ENCODE measurements at regions of chr4 and their contacts with region 1.

Region 1: GRCh38 chr4:86924811-86925210 is 10.0 kb upstream of the AFF1 start:
- DNase-seq: no peak
- H3K4me3 Mint-ChIP-seq: no peak overlapping the region
- H3K27ac Mint-ChIP-seq: no peak overlapping the region
- H3K4me1 Mint-ChIP-seq: peaks cover 11% of the 10 kb centered on the region
- H3K27me3 Mint-ChIP-seq: no peaks in the 10 kb centered on the region

Region 2: DNA sequence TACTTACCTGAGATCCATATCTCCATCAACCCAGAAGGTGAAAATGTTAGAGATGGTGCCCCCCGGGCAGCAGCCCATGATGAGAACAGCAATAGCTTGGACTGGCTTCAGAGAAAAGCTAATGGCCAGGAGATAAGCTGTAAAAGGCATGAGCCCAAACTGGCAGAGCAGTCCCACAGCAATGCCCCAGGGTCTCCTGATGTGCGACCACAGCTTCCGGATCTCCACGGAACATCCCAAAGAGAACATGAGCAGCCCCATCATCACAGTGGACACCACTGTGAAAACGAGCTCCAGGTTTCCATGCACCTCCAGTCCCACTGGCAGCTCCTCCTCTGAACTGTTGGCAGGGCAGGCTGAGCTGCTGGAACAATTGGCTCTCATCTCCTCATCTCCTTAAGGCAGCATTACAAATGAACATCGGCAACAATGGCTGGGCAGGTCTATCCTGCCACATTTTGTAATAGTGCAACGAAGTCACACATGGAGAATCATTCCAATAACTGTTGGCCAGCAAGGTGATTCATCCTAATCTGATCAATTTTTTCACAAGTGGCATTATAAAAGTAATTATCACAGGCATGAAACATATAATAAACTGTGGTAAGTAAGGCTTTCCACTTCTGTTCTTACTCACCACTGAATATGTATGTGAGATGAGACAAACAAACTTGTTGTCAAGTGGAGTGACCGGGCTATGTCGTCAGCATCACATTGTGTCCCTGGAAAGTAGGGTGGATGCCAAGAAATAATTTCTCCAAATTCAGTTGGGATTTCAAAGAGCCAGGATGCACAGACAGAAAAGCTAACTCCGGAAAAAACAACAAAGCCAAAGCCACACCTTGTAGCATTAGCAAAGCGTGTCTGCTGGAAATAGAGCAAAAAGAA is 75.8 kb before region 1 on chr4 and contains the start of gene SLC10A6:
- CTCF ChIA-PET with region 1: no interaction called
- POLR2A ChIA-PET with region 1: no interaction called
- DNase-seq: no peak
- H3K4me3 Mint-ChIP-seq: no peak within 1 kb of the TSS
- H3K27ac Mint-ChIP-seq: no peak within 1 kb of the TSS
- H3K4me1 Mint-ChIP-seq: no peaks in the 10 kb centered on the region
- H3K27me3 Mint-ChIP-seq: no peaks in the 10 kb centered on the region
- total RNA-seq, gene SLC10A6: not detected

Region 3: DNA sequence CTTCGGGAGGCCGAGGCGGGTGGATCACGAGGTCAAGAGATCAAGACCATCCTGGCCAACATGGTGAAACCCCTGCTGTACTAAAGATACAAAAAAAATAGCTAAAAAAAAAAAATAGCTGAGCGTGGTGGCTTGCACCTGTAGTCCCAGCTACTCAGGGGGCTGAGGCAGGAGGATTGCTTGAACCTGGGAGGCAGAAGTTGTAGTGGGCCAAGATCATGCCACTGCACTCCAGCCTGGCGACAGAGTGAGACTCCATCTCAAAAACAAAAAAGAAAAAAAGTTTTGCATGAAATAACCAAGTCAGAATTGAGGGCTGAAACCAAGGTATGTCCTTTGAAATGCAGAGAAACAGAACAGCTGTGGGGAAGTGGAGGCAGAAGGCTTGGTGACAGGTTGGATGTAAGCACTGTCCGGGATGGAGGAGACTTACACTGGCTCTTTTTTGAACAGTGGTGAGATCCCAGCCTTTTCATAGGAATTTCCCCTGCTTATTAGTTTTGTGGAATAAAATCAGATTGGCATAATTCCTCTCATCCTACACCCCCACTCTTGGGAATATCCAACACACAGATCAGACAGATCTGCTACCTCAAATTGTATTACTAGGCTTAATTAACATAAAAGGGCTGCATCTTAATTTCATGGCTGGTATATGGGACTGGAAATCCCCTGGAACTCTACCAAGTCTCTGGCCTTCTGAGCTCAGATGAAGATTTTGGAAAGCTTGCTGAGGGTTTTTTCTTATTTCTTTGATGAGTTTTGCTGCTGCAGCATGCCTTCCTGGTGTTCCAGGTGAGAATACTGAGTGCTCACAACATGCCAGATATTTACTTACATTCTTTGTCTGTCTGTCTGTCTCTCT is 13.8 kb before region 1 on chr4:
- CTCF ChIA-PET with region 1: interaction called, 18 read pairs
- POLR2A ChIA-PET with region 1: interaction called, 4 read pairs
- DNase-seq: no peak
- H3K4me3 Mint-ChIP-seq: no peak overlapping the region
- H3K27ac Mint-ChIP-seq: no peak overlapping the region
- H3K4me1 Mint-ChIP-seq: peaks cover 21% of the 10 kb centered on the region
- H3K27me3 Mint-ChIP-seq: peaks cover 2% of the 10 kb centered on the region

Region 4: GRCh38 chr4:86934771-86935565 is 10.2 kb after region 1 on chr4 and contains the start of gene AFF1:
- CTCF ChIA-PET with region 1: interaction called, 23 read pairs
- POLR2A ChIA-PET with region 1: no interaction called
- DNase-seq: peak; percentile 88
- H3K4me3 Mint-ChIP-seq: peak within 1 kb of the TSS; percentile 83
- H3K27ac Mint-ChIP-seq: peak within 1 kb of the TSS; percentile 94
- H3K4me1 Mint-ChIP-seq: peaks cover 46% of the 10 kb centered on the region
- H3K27me3 Mint-ChIP-seq: no peaks in the 10 kb centered on the region
- total RNA-seq, gene AFF1: 71.4 to 74.5 TPM

Region 5: DNA sequence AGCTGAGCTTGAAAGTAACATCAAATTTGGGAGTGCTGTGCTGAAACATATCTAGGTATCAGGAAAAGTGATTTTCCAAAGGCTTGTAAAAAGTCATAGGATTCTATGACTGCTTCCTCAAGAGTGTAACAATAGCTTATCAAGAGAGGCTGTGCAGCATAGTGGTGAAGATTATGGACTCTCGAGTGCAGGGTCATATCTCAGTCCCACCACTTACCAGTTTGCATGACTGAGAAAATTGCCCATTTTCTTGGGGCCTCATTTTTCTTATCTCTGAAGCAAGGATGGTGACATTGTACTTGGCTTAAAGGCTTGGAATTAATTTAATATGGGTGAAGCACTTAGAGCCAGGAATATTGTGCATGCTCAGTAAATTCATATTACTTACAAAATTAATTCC is 67.2 kb after region 1 on chr4:
- CTCF ChIA-PET with region 1: no interaction called
- POLR2A ChIA-PET with region 1: no interaction called
- DNase-seq: no peak
- H3K4me3 Mint-ChIP-seq: no peak overlapping the region
- H3K27ac Mint-ChIP-seq: no peak overlapping the region
- H3K4me1 Mint-ChIP-seq: peaks cover 3% of the 10 kb centered on the region
- H3K27me3 Mint-ChIP-seq: no peaks in the 10 kb centered on the region

Region 6: GRCh38 chr4:87038837-87039615 is 114.2 kb after region 1 on chr4:
- CTCF ChIA-PET with region 1: no interaction called
- POLR2A ChIA-PET with region 1: no interaction called
- DNase-seq: no peak
- H3K4me3 Mint-ChIP-seq: no peak overlapping the region
- H3K27ac Mint-ChIP-seq: no peak overlapping the region
- H3K4me1 Mint-ChIP-seq: peaks cover 36% of the 10 kb centered on the region
- H3K27me3 Mint-ChIP-seq: no peaks in the 10 kb centered on the region

Region 7: GRCh38 chr4:87093443-87094123 is 168.8 kb after region 1 on chr4:
- CTCF ChIA-PET with region 1: interaction called, 41 read pairs
- POLR2A ChIA-PET with region 1: interaction called, 3 read pairs
- DNase-seq: peak; percentile 61
- H3K4me3 Mint-ChIP-seq: no peak overlapping the region
- H3K27ac Mint-ChIP-seq: no peak overlapping the region
- H3K4me1 Mint-ChIP-seq: peaks cover 25% of the 10 kb centered on the region
- H3K27me3 Mint-ChIP-seq: no peaks in the 10 kb centered on the region

Region 8: GRCh38 chr4:87147116-87147515 is 222.3 kb after region 1 on chr4:
- CTCF ChIA-PET with region 1: interaction called, 10 read pairs
- POLR2A ChIA-PET with region 1: no interaction called
- DNase-seq: no peak
- H3K4me3 Mint-ChIP-seq: no peak overlapping the region
- H3K27ac Mint-ChIP-seq: no peak overlapping the region
- H3K4me1 Mint-ChIP-seq: peaks cover 4% of the 10 kb centered on the region
- H3K27me3 Mint-ChIP-seq: no peaks in the 10 kb centered on the region

Measured in activated CD4-positive, alpha-beta T cell treated with anti-CD3 and anti-CD28 coated beads, Interleukin-2, amount 10 ng/mL, durations not matched to agents 7 days and 5 days (primary cell).